ENCODE measurements at regions of chr12 and their contacts with region 1.

Region 1: GRCh38 chr12:132956011-132956788 is at the start of gene ZNF605:
- DNase-seq: peak; percentile 70 to 95 (median 86)
- ATAC-seq: peak; percentile 93
- H3K4me3 ChIP-seq: peak within 1 kb of the TSS; percentile 94 to 100
- H3K4me3 Mint-ChIP-seq: peak within 1 kb of the TSS; percentile 96
- H3K27ac ChIP-seq: peak within 1 kb of the TSS; percentile 78 to 86
- H3K27ac Mint-ChIP-seq: peak within 1 kb of the TSS; percentile 91
- H3K4me1 ChIP-seq: peaks cover 22% of the 10 kb centered on the region
- H3K4me1 Mint-ChIP-seq: peaks cover 32% of the 10 kb centered on the region
- H3K27me3 ChIP-seq: no peaks in the 10 kb centered on the region
- H3K27me3 Mint-ChIP-seq: no peaks in the 10 kb centered on the region
- CTCF ChIP-seq: no peak
- total RNA-seq, gene ZNF605: 5.0 TPM

Region 2: DNA sequence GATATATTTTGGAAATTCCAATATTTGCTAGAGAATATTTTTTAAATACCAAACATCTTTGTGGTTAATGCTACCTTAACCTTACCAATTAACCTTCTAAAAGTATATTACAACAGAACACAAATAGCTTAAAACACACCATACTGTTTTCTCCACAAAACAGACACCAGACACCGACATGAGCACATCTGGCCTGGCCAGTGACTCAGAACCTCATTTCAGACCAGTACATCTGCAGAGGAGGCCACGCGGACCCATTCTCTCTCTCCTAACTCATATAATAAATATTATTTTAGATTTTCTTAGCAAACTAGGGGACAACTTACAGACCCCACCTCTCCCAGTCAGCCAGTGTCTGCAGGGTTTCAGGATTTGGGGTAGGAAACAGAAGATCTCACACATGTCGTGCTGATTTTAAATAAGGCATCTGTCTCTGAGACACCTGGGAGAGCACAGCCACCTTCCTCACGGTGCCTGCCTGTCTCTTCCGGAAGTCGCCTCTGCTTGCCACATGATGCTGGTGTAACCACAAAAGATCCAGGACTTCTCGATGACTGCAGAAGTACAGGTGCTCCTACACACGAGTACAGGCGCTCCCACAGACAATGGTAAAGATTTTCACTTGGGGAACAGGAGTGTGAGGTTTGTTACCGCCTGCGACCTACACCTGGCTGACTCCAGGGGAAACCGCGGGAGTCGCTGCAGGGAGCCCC is 184.9 kb before region 1 on chr12:
- CTCF ChIA-PET with region 1: no interaction called
- POLR2A ChIA-PET with region 1: no interaction called
- intact Hi-C with region 1: loop called in 1 of 2 experiments (anchors 5 kb)
- DNase-seq: peak; percentile 13 to 79 (median 51)
- ATAC-seq: peak; percentile 84
- H3K4me3 ChIP-seq: peak overlapping the region in 1 of 2 experiments; percentile 37
- H3K4me3 Mint-ChIP-seq: peak overlapping the region; percentile 49
- H3K27ac ChIP-seq: peak overlapping the region; percentile 34 to 46
- H3K27ac Mint-ChIP-seq: peak overlapping the region; percentile 83
- H3K4me1 ChIP-seq: peaks cover 69% of the 10 kb centered on the region
- H3K4me1 Mint-ChIP-seq: peaks cover 62% of the 10 kb centered on the region
- H3K27me3 ChIP-seq: no peaks in the 10 kb centered on the region
- H3K27me3 Mint-ChIP-seq: no peaks in the 10 kb centered on the region
- CTCF ChIP-seq: no peak

Region 3: DNA sequence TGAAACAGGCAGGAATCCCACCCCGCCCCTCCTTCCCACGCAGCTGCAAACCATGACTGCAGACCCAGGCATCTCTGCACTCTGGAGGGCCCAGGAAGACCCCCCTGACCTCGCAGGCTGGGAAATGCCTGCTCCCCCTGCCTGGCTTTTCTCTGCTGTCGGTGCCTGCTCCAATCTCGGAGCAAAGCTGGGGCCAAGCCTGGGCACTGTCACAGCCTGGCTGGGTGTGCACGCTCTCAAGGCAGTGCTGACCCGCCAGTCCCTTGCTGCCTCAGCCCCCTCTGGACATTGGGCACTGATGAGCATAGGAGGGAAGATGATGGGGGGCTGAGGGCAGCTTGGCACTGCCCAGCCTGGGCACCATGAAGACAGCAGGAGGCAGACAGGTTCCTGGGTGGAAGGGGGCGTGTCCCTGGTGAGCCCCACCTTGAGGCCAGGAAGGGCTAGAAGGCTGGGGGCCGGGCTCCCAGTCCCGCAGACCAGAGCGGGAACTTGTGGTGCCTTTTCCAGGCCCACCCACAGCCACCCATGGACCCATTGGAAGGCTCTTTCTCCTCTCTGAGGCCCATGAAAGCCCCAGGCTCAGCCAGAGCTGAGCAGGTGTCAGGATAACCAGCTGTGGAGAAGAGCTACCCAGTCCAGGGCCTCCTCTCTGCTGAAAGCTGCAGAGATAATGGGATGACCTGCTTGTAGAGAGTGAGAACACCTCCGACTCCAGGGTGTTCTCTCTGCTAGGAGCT is 10.6 kb after region 1 on chr12:
- CTCF ChIA-PET with region 1: no interaction called
- POLR2A ChIA-PET with region 1: no interaction called
- intact Hi-C with region 1: no loop called
- DNase-seq: no peak
- ATAC-seq: no peak
- H3K4me3 ChIP-seq: no peak overlapping the region
- H3K4me3 Mint-ChIP-seq: no peak overlapping the region
- H3K27ac ChIP-seq: no peak overlapping the region
- H3K27ac Mint-ChIP-seq: no peak overlapping the region
- H3K4me1 ChIP-seq: no peaks in the 10 kb centered on the region
- H3K4me1 Mint-ChIP-seq: no peaks in the 10 kb centered on the region
- H3K27me3 ChIP-seq: no peaks in the 10 kb centered on the region
- H3K27me3 Mint-ChIP-seq: no peaks in the 10 kb centered on the region
- CTCF ChIP-seq: no peak

Region 4: DNA sequence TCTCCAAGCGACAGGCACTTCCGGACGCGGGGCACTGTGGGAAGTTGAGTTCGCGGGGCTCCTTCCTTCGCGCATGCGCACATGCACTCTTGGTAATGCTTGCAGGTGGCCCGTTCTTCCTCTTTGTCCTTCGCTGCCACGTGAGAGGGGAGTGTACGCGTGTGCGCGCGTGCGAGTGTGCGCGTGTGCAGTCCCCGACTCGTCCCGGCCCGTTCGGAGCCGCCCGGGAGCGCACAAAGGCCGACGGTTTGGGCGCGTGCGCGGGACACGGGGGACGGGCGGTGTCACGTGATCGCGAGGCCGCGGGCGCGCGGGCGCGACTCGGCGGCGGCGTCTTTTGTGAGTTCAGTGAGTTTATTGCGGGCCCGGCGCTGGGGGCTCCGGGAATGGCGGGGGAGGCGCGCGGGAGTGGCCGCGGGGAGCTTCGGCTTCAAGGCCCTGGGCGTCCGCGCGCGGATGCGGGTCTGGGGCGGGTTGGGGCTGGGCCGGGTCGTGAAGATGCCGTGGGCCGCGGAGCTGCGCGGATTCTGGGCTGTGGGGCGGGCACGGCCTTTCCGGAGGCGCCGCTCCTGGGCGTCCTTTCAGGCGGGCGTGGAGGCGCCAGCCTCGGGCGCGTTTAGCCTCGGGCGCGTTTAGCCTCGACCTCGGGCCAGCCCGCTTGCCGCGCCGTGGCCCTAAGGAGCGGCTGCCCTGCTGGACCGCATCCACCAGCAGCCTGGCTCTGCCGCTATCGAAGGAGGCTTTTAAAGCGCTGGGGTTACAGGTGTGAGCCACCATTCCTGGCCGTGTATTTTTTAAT is 81.2 kb after region 1 on chr12 and contains the start of gene ZNF84:
- CTCF ChIA-PET with region 1: no interaction called
- POLR2A ChIA-PET with region 1: no interaction called
- intact Hi-C with region 1: loop called (anchors 1 kb)
- DNase-seq: peak; percentile 94 to 99 (median 96)
- ATAC-seq: peak; percentile 97
- H3K4me3 ChIP-seq: peak within 1 kb of the TSS; percentile 62 to 69
- H3K4me3 Mint-ChIP-seq: peak within 1 kb of the TSS; percentile 93
- H3K27ac ChIP-seq: peak within 1 kb of the TSS; percentile 78 to 89
- H3K27ac Mint-ChIP-seq: peak within 1 kb of the TSS; percentile 92
- H3K4me1 ChIP-seq: peaks cover 4% of the 10 kb centered on the region
- H3K4me1 Mint-ChIP-seq: peaks cover 20% of the 10 kb centered on the region
- H3K27me3 ChIP-seq: no peaks in the 10 kb centered on the region
- H3K27me3 Mint-ChIP-seq: no peaks in the 10 kb centered on the region
- CTCF ChIP-seq: no peak
- total RNA-seq, gene ZNF84: 26.8 to 27.2 TPM

Region 5: GRCh38 chr12:133130038-133130807 is 174.0 kb after region 1 on chr12 and contains the starts of genes ZNF10 and ZNF891:
- CTCF ChIA-PET with region 1: no interaction called
- POLR2A ChIA-PET with region 1: no interaction called
- intact Hi-C with region 1: loop called in 1 of 2 experiments (anchors 1 kb)
- DNase-seq: peak; percentile 95 to 99 (median 97)
- ATAC-seq: peak; percentile 86
- H3K4me3 ChIP-seq: peak within 1 kb of the TSS; percentile 56 to 63
- H3K4me3 Mint-ChIP-seq: peak within 1 kb of the TSS; percentile 87
- H3K27ac ChIP-seq: peak within 1 kb of the TSS; percentile 90 to 94
- H3K27ac Mint-ChIP-seq: peak within 1 kb of the TSS; percentile 98
- H3K4me1 ChIP-seq: peaks cover 8% of the 10 kb centered on the region
- H3K4me1 Mint-ChIP-seq: peaks cover 27% of the 10 kb centered on the region
- H3K27me3 ChIP-seq: no peaks in the 10 kb centered on the region
- H3K27me3 Mint-ChIP-seq: no peaks in the 10 kb centered on the region
- CTCF ChIP-seq: no peak
- total RNA-seq, gene ZNF10: 63.5 to 65.5 TPM
- total RNA-seq, gene ZNF891: 4.5 to 5.2 TPM

Region 6: DNA sequence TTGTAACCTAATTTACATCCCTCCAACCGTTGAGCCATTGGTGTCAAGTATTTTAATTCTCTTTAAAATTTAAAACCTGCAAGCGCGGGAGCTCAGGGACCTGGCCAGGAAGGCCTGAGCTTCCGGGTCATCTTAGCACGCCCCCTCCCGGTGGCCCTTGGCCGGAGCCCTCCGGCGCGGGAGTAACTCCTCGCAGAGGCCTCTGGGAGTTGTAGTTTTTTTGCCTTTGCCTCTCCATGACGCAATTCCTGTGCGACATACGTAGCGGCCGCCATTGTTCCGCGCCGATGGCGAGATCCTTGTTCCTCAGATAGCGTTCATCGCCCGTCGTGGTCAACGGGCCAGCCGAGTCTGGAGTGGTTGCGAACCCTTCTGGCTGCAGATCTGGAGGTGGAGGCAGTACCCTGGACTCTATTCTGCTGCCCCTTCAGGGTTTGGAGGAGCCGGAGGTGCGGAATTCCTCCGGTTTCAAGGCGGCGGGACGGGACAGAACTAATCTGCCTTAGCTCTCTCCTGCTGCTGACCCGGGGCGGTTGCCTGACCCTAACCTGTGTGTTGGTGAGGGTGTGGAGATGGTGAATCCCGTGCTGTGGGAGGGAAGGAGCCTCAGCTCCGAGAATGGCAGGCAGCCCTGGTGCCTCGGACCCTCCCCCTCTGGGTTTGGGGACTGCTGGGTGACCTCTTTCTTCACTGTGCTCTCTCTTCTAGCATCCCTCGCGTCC is 225.2 kb after region 1 on chr12 and contains the start of gene ZNF268:
- CTCF ChIA-PET with region 1: no interaction called
- POLR2A ChIA-PET with region 1: no interaction called
- intact Hi-C with region 1: loop called in 1 of 2 experiments (anchors 1 kb)
- DNase-seq: peak; percentile 78 to 93 (median 89)
- ATAC-seq: peak; percentile 92
- H3K4me3 ChIP-seq: peak within 1 kb of the TSS; percentile 73 to 82
- H3K4me3 Mint-ChIP-seq: peak within 1 kb of the TSS; percentile 93
- H3K27ac ChIP-seq: peak within 1 kb of the TSS; percentile 76 to 79
- H3K27ac Mint-ChIP-seq: peak within 1 kb of the TSS; percentile 92
- H3K4me1 ChIP-seq: peaks cover 8% of the 10 kb centered on the region
- H3K4me1 Mint-ChIP-seq: peaks cover 19% of the 10 kb centered on the region
- H3K27me3 ChIP-seq: no peaks in the 10 kb centered on the region
- H3K27me3 Mint-ChIP-seq: no peaks in the 10 kb centered on the region
- CTCF ChIP-seq: peak; percentile 35
- total RNA-seq, gene ZNF268: 23.9 to 24.8 TPM